CD8-positive, alpha-beta T cell (primary cell): ENCODE measurements at regions of chr3 and their contacts with region 1.

Region 1: GRCh38 chr3:119322835-119323722 is 28.9 kb downstream of the ARHGAP31 start:
- DNase-seq: peak; percentile 67 to 96 (median 87)
- ATAC-seq: peak; percentile 83
- H3K4me3 ChIP-seq: peak overlapping the region; percentile 53 to 84
- H3K4me3 Mint-ChIP-seq: peak overlapping the region; percentile 92
- H3K27ac ChIP-seq: peak overlapping the region; percentile 57 to 78
- H3K27ac Mint-ChIP-seq: peak overlapping the region; percentile 96
- H3K4me1 ChIP-seq: peaks cover 13% of the 10 kb centered on the region
- H3K4me1 Mint-ChIP-seq: peaks cover 20% of the 10 kb centered on the region
- H3K27me3 ChIP-seq: no peaks in the 10 kb centered on the region
- H3K27me3 Mint-ChIP-seq: no peaks in the 10 kb centered on the region
- CTCF ChIP-seq: no peak

Region 2: GRCh38 chr3:119240591-119241434 is 82.3 kb before region 1 on chr3 and contains the start of gene B4GALT4:
- CTCF ChIA-PET with region 1: interaction called, 5 read pairs
- POLR2A ChIA-PET with region 1: no interaction called
- intact Hi-C with region 1: loop called (anchors 2 to 5 kb)
- DNase-seq: peak; percentile 34 to 83 (median 63)
- ATAC-seq: peak; percentile 67
- H3K4me3 ChIP-seq: peak within 1 kb of the TSS; percentile 66 to 72
- H3K4me3 Mint-ChIP-seq: peak within 1 kb of the TSS; percentile 88
- H3K27ac ChIP-seq: peak within 1 kb of the TSS; percentile 58 to 67
- H3K27ac Mint-ChIP-seq: peak within 1 kb of the TSS; percentile 92
- H3K4me1 ChIP-seq: peaks cover 30% of the 10 kb centered on the region
- H3K4me1 Mint-ChIP-seq: peaks cover 40% of the 10 kb centered on the region
- H3K27me3 ChIP-seq: no peaks in the 10 kb centered on the region
- H3K27me3 Mint-ChIP-seq: no peaks in the 10 kb centered on the region
- CTCF ChIP-seq: no peak
- total RNA-seq, gene B4GALT4: 18.2 to 18.6 TPM

Region 3: DNA sequence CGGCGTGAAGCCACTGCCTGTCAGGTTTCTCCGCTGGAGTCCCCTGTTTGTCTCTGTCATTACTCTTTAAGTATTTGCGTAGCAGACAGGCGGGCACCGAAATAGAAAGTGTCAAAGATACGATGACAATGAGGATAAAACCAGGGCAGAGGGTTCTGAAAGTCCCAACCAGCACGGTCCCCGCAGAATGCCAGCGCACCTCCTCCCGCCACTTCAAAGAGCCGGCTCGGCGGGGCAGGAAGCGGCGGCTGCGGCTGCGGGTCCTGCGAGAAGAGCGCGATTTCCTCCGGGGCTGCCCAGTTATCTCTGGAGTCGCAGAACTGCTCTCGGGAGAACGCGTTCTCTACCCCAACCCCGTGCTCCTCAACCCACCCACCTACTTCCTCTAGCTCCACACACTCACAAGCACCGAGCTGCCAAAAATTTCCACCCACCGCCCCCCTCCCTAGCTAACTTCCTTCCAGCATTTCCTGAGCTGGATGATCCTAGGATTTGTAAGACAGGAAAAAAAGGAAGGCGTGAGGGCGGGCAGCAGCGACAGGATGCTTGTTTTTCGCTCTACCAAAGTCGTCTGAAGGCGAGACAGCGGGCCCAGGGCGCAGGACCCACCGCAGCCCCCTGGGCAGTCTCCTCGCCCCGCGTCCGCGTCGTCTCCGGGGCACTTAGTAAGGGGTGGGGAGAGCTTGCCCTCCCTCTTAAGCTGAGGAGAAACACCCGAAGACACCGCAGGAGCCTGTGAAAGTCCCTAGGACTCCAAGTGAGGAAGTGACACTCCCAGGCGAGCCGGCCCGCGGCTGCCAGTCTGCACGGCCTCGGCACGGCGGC is 29.0 kb before region 1 on chr3 and contains the start of gene ARHGAP31:
- CTCF ChIA-PET with region 1: no interaction called
- POLR2A ChIA-PET with region 1: interaction called, 20 read pairs
- intact Hi-C with region 1: loop called (anchors 1 kb)
- DNase-seq: peak; percentile 71 to 96 (median 86)
- ATAC-seq: peak; percentile 64
- H3K4me3 ChIP-seq: peak within 1 kb of the TSS; percentile 61 to 82
- H3K4me3 Mint-ChIP-seq: peak within 1 kb of the TSS; percentile 95
- H3K27ac ChIP-seq: peak within 1 kb of the TSS; percentile 58 to 84
- H3K27ac Mint-ChIP-seq: peak within 1 kb of the TSS; percentile 98
- H3K4me1 ChIP-seq: peaks cover 30% of the 10 kb centered on the region
- H3K4me1 Mint-ChIP-seq: peaks cover 55% of the 10 kb centered on the region
- H3K27me3 ChIP-seq: no peaks in the 10 kb centered on the region
- H3K27me3 Mint-ChIP-seq: no peaks in the 10 kb centered on the region
- CTCF ChIP-seq: no peak
- total RNA-seq, gene ARHGAP31: 1.00 to 1.1 TPM

Region 4: DNA sequence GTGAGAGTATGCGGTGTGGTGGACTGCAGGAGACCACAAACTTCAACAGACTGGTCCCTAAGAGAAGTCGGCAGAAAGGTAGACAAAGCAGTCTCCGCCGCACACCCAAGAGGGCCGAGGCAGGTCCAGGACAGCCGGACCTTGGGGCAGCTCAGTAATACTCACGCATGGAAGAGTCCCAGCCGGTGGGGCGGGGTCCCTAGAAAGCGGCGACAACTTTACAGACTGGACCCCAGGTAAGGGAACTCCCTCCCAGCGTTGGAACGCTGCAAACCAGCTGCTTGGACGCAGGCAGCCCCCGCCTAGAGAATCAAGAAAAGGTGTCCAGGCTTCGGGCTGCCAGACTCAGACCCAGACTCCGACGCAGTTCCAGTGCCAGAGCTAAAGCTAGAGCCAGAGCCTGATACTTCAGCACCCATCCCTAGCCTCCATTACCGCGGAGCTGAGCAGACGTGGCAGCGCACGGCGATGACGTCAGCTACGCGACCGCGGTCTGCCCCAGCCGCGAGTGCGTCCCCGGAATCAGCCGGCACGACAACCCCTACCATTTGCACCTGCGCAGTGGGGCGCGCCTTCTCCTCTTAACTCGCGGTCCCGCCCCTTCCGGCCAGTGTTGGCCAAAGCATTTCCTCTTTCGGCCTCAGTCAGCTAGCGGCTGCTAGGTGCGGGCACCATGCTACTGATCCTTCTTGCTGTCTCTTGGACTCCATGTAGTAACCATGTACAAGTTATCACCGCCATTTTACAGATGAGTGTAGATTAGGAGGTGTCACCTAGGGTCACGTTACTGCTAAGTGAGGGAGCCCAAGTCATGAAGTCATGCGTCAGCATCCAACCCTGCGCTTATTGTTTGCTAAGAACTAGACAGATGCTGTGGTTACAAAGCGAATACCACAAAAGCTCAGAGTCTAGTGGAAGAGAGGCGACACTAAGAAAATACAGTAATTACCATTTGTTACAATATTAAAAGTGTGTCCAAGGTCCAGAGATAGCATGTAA is 140.4 kb after region 1 on chr3 and contains the start of gene TMEM39A:
- CTCF ChIA-PET with region 1: interaction called, 3 read pairs
- POLR2A ChIA-PET with region 1: interaction called, 3 read pairs
- intact Hi-C with region 1: loop called (anchors 2 to 10 kb)
- DNase-seq: peak; percentile 98 to 100 (median 99)
- ATAC-seq: peak; percentile 86
- H3K4me3 ChIP-seq: peak within 1 kb of the TSS; percentile 93 to 94
- H3K4me3 Mint-ChIP-seq: peak within 1 kb of the TSS; percentile 93
- H3K27ac ChIP-seq: peak within 1 kb of the TSS; percentile 85 to 97
- H3K27ac Mint-ChIP-seq: peak within 1 kb of the TSS; percentile 96
- H3K4me1 ChIP-seq: peaks cover 19% of the 10 kb centered on the region
- H3K4me1 Mint-ChIP-seq: peaks cover 44% of the 10 kb centered on the region
- H3K27me3 ChIP-seq: no peaks in the 10 kb centered on the region
- H3K27me3 Mint-ChIP-seq: no peaks in the 10 kb centered on the region
- CTCF ChIP-seq: no peak
- total RNA-seq, gene TMEM39A: 67.8 to 68.0 TPM

Region 5: GRCh38 chr3:119498186-119498987 is 175.3 kb after region 1 on chr3 and contains the start of gene TIMMDC1:
- CTCF ChIA-PET with region 1: no interaction called
- POLR2A ChIA-PET with region 1: no interaction called
- intact Hi-C with region 1: loop called in 1 of 2 experiments (anchors 10 kb)
- DNase-seq: peak; percentile 93 to 99 (median 98)
- ATAC-seq: peak; percentile 96
- H3K4me3 ChIP-seq: peak within 1 kb of the TSS; percentile 81 to 87
- H3K4me3 Mint-ChIP-seq: peak within 1 kb of the TSS; percentile 100
- H3K27ac ChIP-seq: peak within 1 kb of the TSS; percentile 92 to 95
- H3K27ac Mint-ChIP-seq: peak within 1 kb of the TSS; percentile 100
- H3K4me1 ChIP-seq: peaks cover 25% of the 10 kb centered on the region
- H3K4me1 Mint-ChIP-seq: peaks cover 40% of the 10 kb centered on the region
- H3K27me3 ChIP-seq: no peaks in the 10 kb centered on the region
- H3K27me3 Mint-ChIP-seq: no peaks in the 10 kb centered on the region
- CTCF ChIP-seq: no peak
- total RNA-seq, gene TIMMDC1: 12.1 to 16.8 TPM

Region 6: GRCh38 chr3:120147072-120147871 is 824.2 kb after region 1 on chr3:
- CTCF ChIA-PET with region 1: no interaction called
- POLR2A ChIA-PET with region 1: no interaction called
- intact Hi-C with region 1: no loop called
- DNase-seq: peak; percentile 7 to 81 (median 60)
- ATAC-seq: peak; percentile 98
- H3K4me3 ChIP-seq: no peak overlapping the region
- H3K4me3 Mint-ChIP-seq: no peak overlapping the region
- H3K27ac ChIP-seq: no peak overlapping the region
- H3K27ac Mint-ChIP-seq: peak overlapping the region; percentile 60
- H3K4me1 ChIP-seq: peaks cover 10% of the 10 kb centered on the region
- H3K4me1 Mint-ChIP-seq: peaks cover 22% of the 10 kb centered on the region
- H3K27me3 ChIP-seq: no peaks in the 10 kb centered on the region
- H3K27me3 Mint-ChIP-seq: no peaks in the 10 kb centered on the region
- CTCF ChIP-seq: peak; percentile 62